K562 (cell line): ENCODE measurements at regions of chr7 and their contacts with region 1.

Region 1: GRCh38 chr7:6461946-6462550 is 14.3 kb upstream of the DAGLB start:
- DNase-seq: no peak
- ATAC-seq: no peak
- H3K4me3 ChIP-seq: no peak overlapping the region
- H3K27ac ChIP-seq: no peak overlapping the region
- H3K4me1 ChIP-seq: no peaks in the 10 kb centered on the region
- H3K27me3 ChIP-seq: no peaks in the 10 kb centered on the region
- CTCF ChIP-seq: no peak
- EP300 ChIP-seq: no peak
- POLR2A ChIP-seq: no peak
- RAD21 ChIP-seq: no peak

Region 2: DNA sequence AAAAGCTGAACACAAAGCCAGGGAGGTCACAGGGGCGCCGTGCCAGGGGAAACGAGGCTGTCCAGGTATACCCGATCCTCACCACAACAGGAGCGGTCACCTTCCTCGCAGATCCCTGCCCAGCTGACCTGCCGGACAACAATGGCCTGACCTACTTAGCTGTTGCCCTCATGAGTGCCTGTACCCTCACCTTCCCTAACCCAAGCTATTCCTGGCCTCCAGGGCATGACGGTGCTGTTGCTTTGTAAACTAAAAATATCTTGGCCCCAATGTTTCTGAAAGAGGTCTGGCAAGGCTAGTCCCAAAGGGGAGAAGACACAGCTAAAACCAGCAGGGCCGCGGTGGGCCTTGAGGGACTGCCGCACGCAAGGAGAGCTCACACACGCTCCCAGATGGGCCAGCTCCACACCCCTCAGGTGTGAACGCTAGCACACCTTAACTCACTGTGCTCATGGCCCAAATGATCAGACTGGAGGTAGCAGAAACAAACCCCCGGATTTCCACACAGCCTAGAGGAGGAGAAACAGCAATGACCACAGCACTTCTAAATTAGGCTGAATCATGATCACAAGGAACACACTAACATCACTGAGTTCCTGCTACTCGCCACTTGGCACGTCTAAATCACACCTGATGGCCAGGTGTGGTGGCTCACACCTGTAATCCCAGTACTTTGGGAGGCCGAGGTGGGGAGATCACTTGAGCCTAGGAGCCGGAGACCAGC is 123.3 kb before region 1 on chr7:
- CTCF ChIA-PET with region 1: no interaction called
- POLR2A ChIA-PET with region 1: no interaction called
- in situ Hi-C with region 1: no loop called
- intact Hi-C with region 1: no loop called
- DNase-seq: no peak
- ATAC-seq: no peak
- H3K4me3 ChIP-seq: no peak overlapping the region
- H3K27ac ChIP-seq: no peak overlapping the region
- H3K4me1 ChIP-seq: peaks cover 0 to 3% of the 10 kb centered on the region in 2 experiments; a peak in 1 of 5 replicates
- H3K27me3 ChIP-seq: no peaks in the 10 kb centered on the region
- CTCF ChIP-seq: no peak
- EP300 ChIP-seq: no peak
- POLR2A ChIP-seq: no peak
- RAD21 ChIP-seq: no peak

Region 3: GRCh38 chr7:6416516-6417145 is 45.4 kb before region 1 on chr7:
- CTCF ChIA-PET with region 1: no interaction called
- POLR2A ChIA-PET with region 1: no interaction called
- in situ Hi-C with region 1: no loop called
- intact Hi-C with region 1: no loop called
- DNase-seq: peak in 3 of 4 experiments; percentile 31 to 52 (median 41)
- ATAC-seq: peak; percentile 74
- H3K4me3 ChIP-seq: no peak overlapping the region
- H3K27ac ChIP-seq: no peak overlapping the region
- H3K4me1 ChIP-seq: peaks cover 0 to 3% of the 10 kb centered on the region in 2 experiments; a peak in 1 of 5 replicates
- H3K27me3 ChIP-seq: no peaks in the 10 kb centered on the region
- CTCF ChIP-seq: peak in 2 of 3 experiments; percentile 9 to 32; a peak in 2 of 6 replicates
- EP300 ChIP-seq: no peak
- POLR2A ChIP-seq: no peak
- RAD21 ChIP-seq: no peak

Region 4: GRCh38 chr7:6476596-6477299 is 14.7 kb after region 1 on chr7:
- CTCF ChIA-PET with region 1: no interaction called
- POLR2A ChIA-PET with region 1: interaction called, 16 read pairs
- in situ Hi-C with region 1: no loop called
- intact Hi-C with region 1: no loop called
- DNase-seq: no peak
- ATAC-seq: peak; percentile 19; the same call in 1 of the 3 replicates
- H3K4me3 ChIP-seq: no peak overlapping the region
- H3K27ac ChIP-seq: no peak overlapping the region
- H3K4me1 ChIP-seq: peaks cover 3 to 8% of the 10 kb centered on the region in 2 experiments; a peak in 3 of 5 replicates
- H3K27me3 ChIP-seq: no peaks in the 10 kb centered on the region
- CTCF ChIP-seq: no peak
- EP300 ChIP-seq: no peak
- POLR2A ChIP-seq: no peak
- RAD21 ChIP-seq: no peak